ENCODE measurements at regions of chr14 and their contacts with region 1.

Region 1: GRCh38 chr14:93493054-93493453 is 62.3 kb downstream of the UNC79 start:
- DNase-seq: peak in 1 of 10 donors; percentile 15
- H3K4me3 ChIP-seq: no peak overlapping the region
- H3K27ac ChIP-seq: no peak overlapping the region
- H3K27me3 ChIP-seq: no peaks in the 10 kb centered on the region
- CTCF ChIP-seq: no peak

Region 2: DNA sequence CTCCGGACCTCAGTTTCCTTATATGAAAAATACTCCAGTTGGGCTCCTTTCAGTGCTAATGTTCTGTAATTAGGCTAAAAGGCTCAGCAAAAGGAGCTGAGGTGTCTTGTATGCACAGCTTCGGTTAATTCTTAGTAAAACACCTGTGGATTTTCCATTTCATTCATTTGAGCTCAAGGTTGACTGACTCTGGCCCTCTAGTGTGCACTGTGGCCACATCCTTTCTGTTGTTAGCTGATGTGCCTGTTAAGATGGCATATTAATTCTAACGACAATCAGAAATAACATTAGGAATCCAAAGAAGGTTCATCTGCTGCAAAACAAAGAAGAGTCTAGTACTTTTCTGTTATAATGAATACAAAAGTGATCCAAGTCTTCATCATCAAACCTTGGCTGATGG is 16.7 kb before region 1 on chr14:
- intact Hi-C with region 1: loop called in 1 of 2 experiments (anchors 1 kb)
- DNase-seq: no peak
- H3K4me3 ChIP-seq: no peak overlapping the region
- H3K27ac ChIP-seq: no peak overlapping the region
- H3K27me3 ChIP-seq: no peaks in the 10 kb centered on the region
- CTCF ChIP-seq: no peak

Measured in dorsolateral prefrontal cortex (tissue), 120 donors.